ENCODE measurements at regions of chr9 and their contacts with region 1.

Region 1: GRCh38 chr9:88583901-88584596 is 49.1 kb downstream of the NXNL2 start:
- DNase-seq: no peak
- ATAC-seq: peak in 3 of 4 donors; percentile 22 to 63 (median 39)
- H3K4me3 ChIP-seq: no peak overlapping the region
- H3K27ac ChIP-seq: peak overlapping the region in 1 of 12 donors; percentile 26
- H3K4me1 ChIP-seq: peaks cover 0 to 6% (median 0%) of the 10 kb centered on the region in 12 donors
- H3K27me3 ChIP-seq: no peaks in the 10 kb centered on the region
- CTCF ChIP-seq: no peak
- POLR2A ChIP-seq: no peak

Region 2: DNA sequence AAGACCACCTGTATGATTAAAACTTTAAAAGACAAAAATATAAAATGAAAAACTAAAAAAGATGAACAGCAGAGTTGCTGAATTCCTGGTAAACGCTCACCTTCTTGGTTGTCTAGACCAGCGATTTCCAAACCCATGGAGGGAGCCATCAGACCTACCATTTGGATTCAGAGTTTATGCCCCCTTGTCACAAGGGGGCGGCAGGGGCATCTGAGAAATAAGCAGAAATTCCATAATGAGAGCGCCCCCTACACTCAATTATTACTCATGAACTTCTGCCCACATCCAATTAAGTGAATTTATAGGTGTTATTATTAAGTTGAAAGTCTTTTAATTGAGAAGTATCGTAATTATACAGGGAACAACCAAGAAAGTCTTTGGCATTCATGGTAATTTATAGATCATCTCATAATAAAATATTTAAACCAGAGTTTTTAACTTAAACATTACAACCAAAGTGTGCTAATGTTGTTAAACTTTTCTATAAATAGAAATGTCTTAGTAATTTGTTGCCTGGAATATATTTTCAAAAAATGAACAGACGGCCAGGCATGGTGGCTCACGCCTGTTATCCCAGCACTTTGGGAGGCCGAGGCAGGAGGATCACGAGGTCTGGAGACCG is 410.6 kb before region 1 on chr9:
- intact Hi-C with region 1: loop called in 8 of 10 experiments (anchors 2 to 10 kb)
- DNase-seq: peak in 4 of 5 donors; percentile 25 to 56 (median 52)
- ATAC-seq: peak in 3 of 4 donors; percentile 53 to 71 (median 66)
- H3K4me3 ChIP-seq: no peak overlapping the region
- H3K27ac ChIP-seq: no peak overlapping the region
- H3K4me1 ChIP-seq: no peaks in the 10 kb centered on the region
- H3K27me3 ChIP-seq: peaks cover 0 to 2% (median 0%) of the 10 kb centered on the region in 9 donors
- CTCF ChIP-seq: peak; percentile 34 to 83 (median 70)
- POLR2A ChIP-seq: no peak

Region 3: GRCh38 chr9:88645172-88645878 is 61.3 kb after region 1 on chr9:
- intact Hi-C with region 1: loop called in 1 of 10 experiments (anchors 10 kb)
- DNase-seq: no peak
- ATAC-seq: no peak
- H3K4me3 ChIP-seq: no peak overlapping the region
- H3K27ac ChIP-seq: peak overlapping the region in 3 of 12 donors; percentile 8 to 40 (median 12)
- H3K4me1 ChIP-seq: peaks cover 0 to 9% (median 0%) of the 10 kb centered on the region in 12 donors
- H3K27me3 ChIP-seq: no peaks in the 10 kb centered on the region
- CTCF ChIP-seq: no peak
- POLR2A ChIP-seq: no peak

Region 4: GRCh38 chr9:88766778-88767503 is 182.9 kb after region 1 on chr9:
- intact Hi-C with region 1: no loop called
- DNase-seq: no peak
- ATAC-seq: peak in 1 of 4 donors; percentile 46
- H3K4me3 ChIP-seq: no peak overlapping the region
- H3K27ac ChIP-seq: no peak overlapping the region
- H3K4me1 ChIP-seq: peaks cover 0 to 3% (median 0%) of the 10 kb centered on the region in 12 donors
- H3K27me3 ChIP-seq: no peaks in the 10 kb centered on the region
- CTCF ChIP-seq: no peak
- POLR2A ChIP-seq: no peak